ENCODE measurements at regions of chr13 and their contacts with region 1.

Region 1: GRCh38 chr13:54574791-54575190 is 1546.2 kb downstream of the OLFM4 start:
- DNase-seq: no peak
- H3K4me3 ChIP-seq: no peak overlapping the region
- H3K4me3 Mint-ChIP-seq: no peak overlapping the region
- H3K27ac Mint-ChIP-seq: no peak overlapping the region
- H3K4me1 ChIP-seq: peaks cover 15% of the 10 kb centered on the region
- H3K4me1 Mint-ChIP-seq: peaks cover 10% of the 10 kb centered on the region
- H3K27me3 ChIP-seq: no peaks in the 10 kb centered on the region
- H3K27me3 Mint-ChIP-seq: no peaks in the 10 kb centered on the region
- CTCF ChIP-seq: no peak

Region 2: GRCh38 chr13:54162062-54162461 is 412.7 kb before region 1 on chr13:
- CTCF ChIA-PET with region 1: no interaction called
- POLR2A ChIA-PET with region 1: no interaction called
- intact Hi-C with region 1: no loop called
- DNase-seq: peak in 1 of 2 experiments; percentile 20
- H3K4me3 ChIP-seq: no peak overlapping the region
- H3K4me3 Mint-ChIP-seq: no peak overlapping the region
- H3K27ac Mint-ChIP-seq: no peak overlapping the region
- H3K4me1 ChIP-seq: no peaks in the 10 kb centered on the region
- H3K4me1 Mint-ChIP-seq: no peaks in the 10 kb centered on the region
- H3K27me3 ChIP-seq: no peaks in the 10 kb centered on the region
- H3K27me3 Mint-ChIP-seq: no peaks in the 10 kb centered on the region
- CTCF ChIP-seq: peak; percentile 17 to 26

Region 3: DNA sequence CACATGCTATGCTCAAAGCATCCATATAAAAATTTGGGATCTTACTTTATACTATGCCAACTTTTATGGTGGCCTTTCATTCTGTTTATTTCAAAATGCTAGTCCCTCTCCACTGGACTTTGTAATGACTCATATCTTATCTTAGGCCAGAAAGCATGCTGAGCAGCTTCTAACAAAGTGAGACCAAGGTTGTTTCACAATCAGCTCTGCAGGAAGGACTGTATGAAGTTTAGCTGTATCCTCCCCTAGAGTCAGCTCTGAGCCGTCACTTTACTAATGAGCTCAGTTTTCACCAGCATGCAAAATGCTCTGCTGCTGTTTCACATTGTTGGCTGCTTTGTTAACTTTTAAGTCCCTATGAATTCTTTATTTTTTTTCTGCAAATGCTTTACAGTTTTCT is 62.6 kb after region 1 on chr13:
- CTCF ChIA-PET with region 1: no interaction called
- POLR2A ChIA-PET with region 1: no interaction called
- intact Hi-C with region 1: loop called (anchors 5 kb)
- DNase-seq: peak; percentile 59 to 72
- H3K4me3 ChIP-seq: no peak overlapping the region
- H3K4me3 Mint-ChIP-seq: no peak overlapping the region
- H3K27ac Mint-ChIP-seq: no peak overlapping the region
- H3K4me1 ChIP-seq: 0 out of 2 replicates have a peak, but pooled peaks cover 11% of the 10 kb centered on the region
- H3K4me1 Mint-ChIP-seq: no peaks in the 10 kb centered on the region
- H3K27me3 ChIP-seq: no peaks in the 10 kb centered on the region
- H3K27me3 Mint-ChIP-seq: no peaks in the 10 kb centered on the region
- CTCF ChIP-seq: no peak